ENCODE measurements at regions of chr12 and their contacts with region 1.

Region 1: DNA sequence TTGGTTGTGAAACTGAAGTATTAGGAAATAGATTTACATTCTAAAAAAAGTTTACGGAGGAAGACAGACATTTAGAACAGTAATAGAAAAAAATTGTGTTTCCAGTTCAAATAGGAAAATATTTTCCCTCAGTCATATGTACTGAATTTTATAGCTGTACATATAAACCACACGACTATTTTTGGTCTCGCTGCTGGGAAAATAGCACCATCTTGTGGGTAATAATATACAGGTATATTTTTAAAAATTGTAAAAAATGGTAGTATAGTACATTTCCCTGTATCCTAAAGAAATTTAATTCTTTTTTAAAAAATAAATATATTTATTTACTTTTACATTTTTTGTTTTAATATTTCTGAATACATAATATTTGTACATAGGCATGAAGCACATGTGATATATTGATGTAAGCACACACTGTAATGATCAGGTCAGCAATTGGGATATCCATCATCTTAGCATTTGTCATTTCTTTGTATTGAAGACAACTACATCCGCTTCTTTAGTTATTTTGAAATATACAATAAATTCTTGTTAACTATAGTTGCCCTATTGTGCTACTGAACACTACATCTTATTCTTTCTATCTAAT is 168.6 kb downstream of the ALX1 start:
- DNase-seq: no peak
- H3K4me3 ChIP-seq: no peak overlapping the region
- H3K27ac ChIP-seq: no peak overlapping the region
- H3K4me1 ChIP-seq: no peaks in the 10 kb centered on the region
- H3K27me3 ChIP-seq: no peaks in the 10 kb centered on the region
- CTCF ChIP-seq: peak; percentile 40 to 52

Region 2: DNA sequence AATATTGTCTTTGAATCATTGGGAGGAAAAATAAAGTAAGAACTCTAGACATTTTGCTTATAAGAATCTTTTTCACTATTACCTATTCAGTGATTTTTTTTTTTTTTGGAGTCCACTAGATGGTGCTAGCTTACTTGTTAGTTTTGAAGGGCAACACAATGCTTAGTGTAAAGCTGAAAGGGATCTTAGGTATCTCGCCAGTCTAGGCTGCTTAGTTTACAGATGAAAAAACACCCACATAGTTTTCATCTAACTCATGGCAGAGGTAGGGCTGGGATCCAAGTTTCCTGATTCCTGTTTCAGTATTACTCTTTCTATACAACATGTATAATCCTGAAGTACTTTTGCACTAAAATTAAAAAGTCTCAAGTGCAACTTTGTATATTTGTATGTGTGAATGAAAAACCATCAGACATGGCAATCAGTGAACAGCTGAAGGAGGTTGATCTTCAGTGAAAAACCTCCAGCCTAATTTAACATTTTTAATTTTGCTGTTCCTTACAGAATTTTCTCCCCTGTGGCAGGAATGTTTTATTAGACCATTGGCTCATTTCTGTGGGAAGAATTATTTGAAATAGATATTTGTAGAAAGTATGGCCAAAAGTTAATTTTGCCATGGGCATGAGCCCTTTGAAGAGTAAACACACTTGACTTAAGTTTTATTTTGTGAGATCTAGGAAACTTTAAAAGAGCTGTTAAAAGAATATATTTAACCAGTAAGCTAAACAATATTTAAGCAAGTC is 371.8 kb before region 1 on chr12:
- CTCF ChIA-PET with region 1: no interaction called
- dilution Hi-C with region 1: no loop called
- in situ Hi-C with region 1: loop called (anchors 10 kb)
- intact Hi-C with region 1: loop called (anchors 1 kb)
- DNase-seq: peak; percentile 89
- H3K4me3 ChIP-seq: no peak overlapping the region
- H3K27ac ChIP-seq: no peak overlapping the region
- H3K4me1 ChIP-seq: no peaks in the 10 kb centered on the region
- H3K27me3 ChIP-seq: no peaks in the 10 kb centered on the region
- CTCF ChIP-seq: peak; percentile 34 to 62

Region 3: DNA sequence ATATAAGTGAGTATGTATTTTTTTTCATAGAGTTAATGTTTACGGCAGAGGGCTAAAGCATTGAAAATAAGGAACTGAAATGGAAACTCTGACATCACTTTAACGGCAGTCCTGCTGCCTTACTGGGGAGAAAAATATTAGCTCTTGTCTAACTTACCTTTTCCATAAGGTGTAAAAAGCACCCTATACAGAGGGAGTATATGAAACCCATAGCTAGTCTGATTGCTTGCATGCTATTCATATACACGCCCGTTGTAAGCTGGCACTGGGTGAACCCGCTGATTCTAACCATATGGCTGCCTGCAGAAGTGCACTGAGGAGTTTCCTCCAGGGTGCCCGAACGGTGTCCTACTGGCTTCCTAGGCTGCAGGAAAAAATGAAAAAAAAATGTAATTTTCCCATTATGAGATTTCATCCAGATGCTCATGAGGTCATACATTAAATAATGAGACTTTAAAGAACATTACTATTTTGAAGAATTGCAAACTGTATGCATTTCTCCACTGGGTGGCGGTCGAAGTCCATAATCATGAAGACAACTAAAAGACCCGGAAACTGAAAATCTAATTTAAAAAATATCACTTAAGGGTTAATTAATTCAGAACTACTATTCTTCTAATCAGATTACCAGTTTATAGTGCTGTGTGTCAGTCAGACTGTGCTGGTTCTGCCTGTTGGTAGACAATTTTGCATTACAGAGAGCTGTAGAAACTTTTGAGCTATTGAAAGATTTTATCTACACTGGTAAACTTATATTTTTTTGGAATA is 23.9 kb before region 1 on chr12:
- CTCF ChIA-PET with region 1: no interaction called
- dilution Hi-C with region 1: no loop called
- in situ Hi-C with region 1: no loop called
- intact Hi-C with region 1: loop called (anchors 2 kb)
- DNase-seq: no peak
- H3K4me3 ChIP-seq: no peak overlapping the region
- H3K27ac ChIP-seq: no peak overlapping the region
- H3K4me1 ChIP-seq: no peaks in the 10 kb centered on the region
- H3K27me3 ChIP-seq: peaks cover 3% of the 10 kb centered on the region
- CTCF ChIP-seq: peak; percentile 53 to 55

Region 4: DNA sequence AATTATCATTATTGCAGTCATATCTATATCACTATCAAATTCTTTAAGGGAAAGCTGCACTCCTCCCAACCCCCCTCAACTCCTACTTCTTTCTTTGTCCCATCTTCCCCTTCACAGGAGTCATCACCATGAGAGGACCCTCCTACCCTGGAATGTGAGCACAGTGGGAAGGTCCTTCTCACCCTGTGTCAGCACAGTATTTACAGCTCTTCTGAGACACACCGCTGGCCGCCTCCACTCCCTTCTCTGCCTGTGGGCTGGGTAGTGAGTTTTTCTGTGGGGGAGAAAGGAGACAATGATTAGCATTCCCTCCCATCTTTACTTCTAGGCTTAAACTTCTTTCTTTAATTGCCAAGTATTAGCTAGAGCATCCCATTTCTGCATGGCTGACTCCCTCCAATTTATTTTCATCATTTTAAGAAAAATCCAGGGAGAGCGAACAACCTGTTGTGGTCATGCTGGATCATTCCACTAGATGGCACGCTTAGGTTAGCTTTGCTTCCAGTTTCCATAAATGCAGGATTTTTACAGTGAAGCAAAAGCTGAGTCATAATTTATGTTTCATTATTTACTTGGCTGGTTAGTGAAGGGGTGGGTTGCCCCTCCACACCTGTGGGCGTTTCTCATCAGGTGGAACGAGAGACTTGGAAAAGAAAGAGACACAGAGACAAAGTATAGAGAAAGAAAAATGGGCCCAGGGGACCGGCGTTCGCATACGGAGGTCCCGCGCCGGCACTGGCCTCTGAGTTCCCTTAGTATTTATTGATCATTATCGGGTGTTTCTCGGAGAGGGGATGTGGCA is 19.9 kb after region 1 on chr12:
- CTCF ChIA-PET with region 1: interaction called, 10 read pairs
- dilution Hi-C with region 1: no loop called
- in situ Hi-C with region 1: no loop called
- intact Hi-C with region 1: no loop called
- DNase-seq: peak; percentile 70
- H3K4me3 ChIP-seq: peak overlapping the region in 2 of 3 experiments; percentile 15 to 16
- H3K27ac ChIP-seq: peak overlapping the region; percentile 31
- H3K4me1 ChIP-seq: peaks cover 43% of the 10 kb centered on the region
- H3K27me3 ChIP-seq: no peaks in the 10 kb centered on the region
- CTCF ChIP-seq: peak; percentile 81 to 84

Measured in mammary epithelial cell (primary cell).